ENCODE measurements at regions of chr20 and their contacts with region 1.

Region 1: DNA sequence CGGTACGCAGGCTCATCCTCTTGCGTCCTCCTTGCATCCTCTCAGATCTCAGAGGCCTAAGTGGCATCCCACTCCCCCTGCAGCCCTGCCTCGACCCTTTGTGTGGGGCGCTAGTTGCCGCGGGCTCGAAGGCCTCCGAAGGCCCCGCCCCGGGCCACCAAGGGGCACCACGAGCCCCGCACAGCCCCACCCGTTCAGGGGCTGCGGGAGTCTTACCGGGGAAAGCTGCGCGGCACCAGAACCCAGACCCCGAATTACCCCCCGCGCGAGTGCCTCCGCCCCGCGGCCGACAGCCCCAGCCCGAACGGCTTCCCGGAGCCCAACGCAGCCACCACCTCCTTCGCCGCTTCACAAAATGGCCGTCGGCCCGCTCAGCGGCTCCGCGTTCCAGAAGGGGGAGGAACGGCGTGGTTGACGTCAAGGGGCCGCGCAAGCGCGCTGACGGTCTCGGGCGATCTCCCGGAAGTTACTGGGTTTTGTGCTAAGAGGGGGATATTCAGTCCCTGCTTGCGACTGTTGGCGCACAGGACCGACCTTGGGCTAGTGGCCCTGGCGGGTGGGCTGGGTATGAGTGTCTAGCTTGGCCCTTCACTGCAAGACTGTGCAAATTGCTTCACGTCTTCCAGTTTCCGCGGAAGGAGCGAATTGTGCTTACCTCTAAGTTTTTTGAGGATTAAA is at the starts of genes CPNE1 and RBM12:
- DNase-seq: peak; percentile 94
- ATAC-seq: peak; percentile 77
- H3K4me3 Mint-ChIP-seq: peak within 1 kb of the TSS; percentile 94
- H3K27ac Mint-ChIP-seq: peak within 1 kb of the TSS; percentile 99
- H3K4me1 Mint-ChIP-seq: peaks cover 48% of the 10 kb centered on the region
- H3K27me3 Mint-ChIP-seq: no peaks in the 10 kb centered on the region
- CTCF ChIP-seq: no peak
- total RNA-seq, gene CPNE1: 234 and 264 TPM in 2 replicates
- total RNA-seq, gene RBM12: 129 and 139 TPM in 2 replicates

Region 2: DNA sequence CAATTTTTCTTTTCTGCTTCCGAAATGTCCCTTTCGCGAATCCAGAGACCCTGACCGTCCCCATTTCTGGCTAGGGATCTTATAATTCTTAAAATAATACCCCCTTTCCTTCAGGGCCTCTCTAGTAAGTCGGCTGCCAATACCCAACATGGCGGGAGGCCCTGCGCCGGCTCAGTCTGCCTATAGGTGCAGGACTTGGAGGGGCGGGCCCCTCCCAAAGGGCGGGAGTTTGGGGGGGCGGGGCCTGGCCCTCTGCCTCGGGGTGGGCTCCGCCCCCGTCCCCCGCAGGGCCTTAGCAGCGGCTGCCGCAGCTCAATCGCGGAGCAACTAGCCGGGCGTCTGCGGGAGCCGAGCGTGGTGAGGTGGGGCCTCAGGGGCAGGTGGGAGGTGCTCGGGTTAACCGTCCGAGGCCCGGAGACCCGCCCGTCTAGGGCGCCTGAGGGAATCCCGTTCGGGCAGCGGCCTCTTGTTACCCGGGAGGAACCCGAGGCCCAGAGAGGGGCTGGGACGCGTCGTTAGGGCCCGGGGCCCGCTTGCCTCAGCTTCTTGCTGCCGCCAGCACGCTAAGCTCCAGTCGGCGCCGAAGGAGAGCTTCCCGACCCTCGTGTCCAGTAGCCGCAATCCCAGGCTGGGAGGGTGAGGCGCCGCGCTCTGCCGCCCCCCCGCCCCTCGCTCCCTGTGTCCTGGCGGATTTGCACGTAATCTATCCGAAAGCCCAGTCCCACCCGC is 209.6 kb before region 1 on chr20 and contains the start of gene CEP250:
- CTCF ChIA-PET with region 1: no interaction called
- POLR2A ChIA-PET with region 1: interaction called, 11 read pairs
- intact Hi-C with region 1: no loop called
- DNase-seq: peak; percentile 90
- ATAC-seq: peak; percentile 99
- H3K4me3 Mint-ChIP-seq: peak within 1 kb of the TSS; percentile 93
- H3K27ac Mint-ChIP-seq: peak within 1 kb of the TSS; percentile 99
- H3K4me1 Mint-ChIP-seq: peaks cover 12% of the 10 kb centered on the region
- H3K27me3 Mint-ChIP-seq: no peaks in the 10 kb centered on the region
- CTCF ChIP-seq: no peak
- total RNA-seq, gene CEP250: 49.6 and 54.7 TPM in 2 replicates

Region 3: DNA sequence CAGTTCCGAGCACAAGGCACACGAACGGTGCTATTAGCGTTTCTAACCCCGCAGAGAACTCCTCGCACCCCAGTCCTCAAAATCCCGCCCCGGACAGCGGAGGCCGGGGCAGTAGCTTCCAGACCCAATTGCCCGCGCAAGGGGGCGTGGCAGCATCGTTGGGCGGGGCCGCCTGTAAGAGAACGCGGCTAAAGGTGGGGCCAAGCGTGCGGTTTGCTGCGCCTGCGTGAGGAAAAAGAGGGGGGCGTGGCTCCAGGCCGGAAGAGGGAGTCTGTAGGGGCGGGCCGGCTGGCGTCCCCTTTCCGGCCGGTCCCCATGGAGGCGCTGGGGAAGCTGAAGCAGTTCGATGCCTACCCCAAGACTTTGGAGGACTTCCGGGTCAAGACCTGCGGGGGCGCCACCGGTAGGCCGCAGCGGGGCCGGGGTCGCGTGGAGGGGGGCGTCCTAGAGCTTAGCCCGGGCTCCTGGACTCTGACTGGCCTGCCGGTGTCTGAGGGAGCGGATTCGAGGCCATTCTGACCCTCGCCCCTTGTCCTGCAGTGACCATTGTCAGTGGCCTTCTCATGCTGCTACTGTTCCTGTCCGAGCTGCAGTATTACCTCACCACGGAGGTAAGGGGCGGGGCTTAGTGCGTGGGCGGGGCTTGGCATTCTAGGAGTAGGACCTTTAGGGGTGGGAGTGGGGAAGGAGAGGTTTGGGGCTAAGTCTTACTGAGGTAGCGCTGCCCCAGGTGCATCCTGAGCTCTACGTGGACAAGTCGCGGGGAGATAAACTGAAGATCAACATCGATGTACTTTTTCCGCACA is 122.7 kb before region 1 on chr20 and contains the start of gene ERGIC3:
- CTCF ChIA-PET with region 1: no interaction called
- POLR2A ChIA-PET with region 1: interaction called, 11 read pairs
- intact Hi-C with region 1: loop called (anchors 1 kb)
- DNase-seq: peak; percentile 97
- ATAC-seq: peak; percentile 92
- H3K4me3 Mint-ChIP-seq: peak within 1 kb of the TSS; percentile 92
- H3K27ac Mint-ChIP-seq: peak within 1 kb of the TSS; percentile 77
- H3K4me1 Mint-ChIP-seq: peaks cover 21% of the 10 kb centered on the region
- H3K27me3 Mint-ChIP-seq: no peaks in the 10 kb centered on the region
- CTCF ChIP-seq: no peak
- total RNA-seq, gene ERGIC3: 159 and 183 TPM in 2 replicates

Region 4: GRCh38 chr20:35699127-35699975 is 34.7 kb after region 1 on chr20 and contains the starts of genes NFS1 and ROMO1:
- CTCF ChIA-PET with region 1: no interaction called
- POLR2A ChIA-PET with region 1: interaction called, 18 read pairs
- intact Hi-C with region 1: loop called (anchors 1 kb)
- DNase-seq: peak; percentile 85
- ATAC-seq: peak; percentile 90
- H3K4me3 Mint-ChIP-seq: peak within 1 kb of the TSS; percentile 97
- H3K27ac Mint-ChIP-seq: peak within 1 kb of the TSS; percentile 91
- H3K4me1 Mint-ChIP-seq: peaks cover 27% of the 10 kb centered on the region
- H3K27me3 Mint-ChIP-seq: no peaks in the 10 kb centered on the region
- CTCF ChIP-seq: no peak
- total RNA-seq, gene NFS1: 27.1 and 30.6 TPM in 2 replicates
- total RNA-seq, gene ROMO1: 96.8 and 131 TPM in 2 replicates

Region 5: DNA sequence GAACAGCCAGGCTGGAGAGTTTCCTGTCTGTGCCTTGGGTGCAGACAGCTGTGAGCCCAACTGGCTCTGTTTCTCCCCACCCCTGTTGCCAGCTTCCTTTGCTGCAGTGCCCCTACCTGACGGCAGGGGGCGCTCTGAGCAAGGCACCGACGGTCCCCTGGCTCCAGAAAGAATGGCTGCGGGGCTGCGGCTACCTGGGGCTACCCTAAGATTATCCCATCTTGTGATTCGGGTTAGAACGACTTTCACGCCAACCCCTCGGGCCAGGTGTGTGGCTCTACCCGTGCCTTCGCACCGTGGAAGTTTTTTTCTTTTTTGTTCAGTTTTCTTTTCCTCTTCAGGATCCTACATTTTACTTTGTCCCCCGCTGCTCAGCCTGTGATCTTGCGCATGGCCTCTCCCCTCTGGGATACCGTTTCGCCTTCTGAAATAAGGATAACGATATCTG is 538.2 kb after region 1 on chr20:
- CTCF ChIA-PET with region 1: no interaction called
- POLR2A ChIA-PET with region 1: no interaction called
- intact Hi-C with region 1: no loop called
- DNase-seq: peak; percentile 71
- ATAC-seq: peak; percentile 71
- H3K4me3 Mint-ChIP-seq: peak overlapping the region; percentile 70
- H3K27ac Mint-ChIP-seq: no peak overlapping the region
- H3K4me1 Mint-ChIP-seq: peaks cover 8% of the 10 kb centered on the region
- H3K27me3 Mint-ChIP-seq: peaks cover 4% of the 10 kb centered on the region
- CTCF ChIP-seq: peak; percentile 82

Region 6: DNA sequence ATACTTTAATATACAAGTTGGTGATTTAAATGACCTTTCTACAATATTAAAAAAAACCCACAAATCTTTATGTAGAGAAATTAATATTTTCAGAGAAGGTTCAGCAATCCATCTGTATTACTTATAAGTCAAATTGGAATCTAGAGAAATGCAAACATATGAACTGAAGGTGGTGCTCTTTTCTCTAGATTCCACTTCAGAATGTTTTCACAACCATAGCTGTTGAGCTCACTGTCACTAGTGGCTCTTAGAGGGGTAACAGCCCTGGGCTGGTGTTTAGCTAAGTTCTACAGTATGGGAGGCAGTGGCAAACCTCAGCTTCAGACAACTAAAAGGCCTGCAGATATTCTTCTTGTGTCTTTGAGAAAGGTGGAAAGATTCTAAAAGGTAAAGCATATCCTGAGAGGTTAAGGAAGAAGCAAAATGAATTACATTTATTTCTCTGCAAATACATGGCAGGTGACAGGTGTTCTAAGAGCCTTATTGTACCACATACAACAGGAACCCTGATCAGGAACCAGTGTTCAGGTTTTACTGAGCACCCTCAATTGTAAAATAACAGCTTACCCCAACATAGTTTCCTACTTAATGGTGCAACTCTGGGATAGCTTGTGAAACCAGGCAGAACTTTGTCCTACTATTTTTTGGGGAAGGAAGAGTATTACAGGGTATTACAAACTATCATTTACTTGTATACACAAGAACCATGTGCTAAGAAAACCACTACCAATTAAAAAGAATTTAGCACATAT is 1343.4 kb after region 1 on chr20:
- CTCF ChIA-PET with region 1: no interaction called
- POLR2A ChIA-PET with region 1: interaction called, 10 read pairs
- intact Hi-C with region 1: no loop called
- DNase-seq: no peak
- ATAC-seq: peak; percentile 26
- H3K4me3 Mint-ChIP-seq: peak overlapping the region; percentile 17
- H3K27ac Mint-ChIP-seq: peak overlapping the region; percentile 69
- H3K4me1 Mint-ChIP-seq: peaks cover 45% of the 10 kb centered on the region
- H3K27me3 Mint-ChIP-seq: no peaks in the 10 kb centered on the region
- CTCF ChIP-seq: no peak

Measured in activated B cell treated with CpG ODN at 0.5 μM for 24 hours (primary cell).